HCT116 (cell line): ENCODE measurements at regions of chr10 and their contacts with region 1.

Region 1: GRCh38 chr10:101467286-101467770 is 113.4 kb downstream of the BTRC start:
- DNase-seq: peak; percentile 76
- ATAC-seq: peak; percentile 94
- H3K4me3 ChIP-seq: no peak overlapping the region
- H3K27ac ChIP-seq: no peak overlapping the region
- H3K4me1 ChIP-seq: no peaks in the 10 kb centered on the region
- H3K27me3 ChIP-seq: no peaks in the 10 kb centered on the region
- CTCF ChIP-seq: peak; percentile 85 to 99 (median 98)
- POLR2A ChIP-seq: no peak
- RAD21 ChIP-seq: peak; percentile 78

Region 2: GRCh38 chr10:101272229-101272868 is 195.0 kb before region 1 on chr10:
- CTCF ChIA-PET with region 1: interaction called, 13 read pairs
- POLR2A ChIA-PET with region 1: no interaction called
- RAD21 ChIA-PET with region 1: no interaction called
- intact Hi-C with region 1: no loop called
- DNase-seq: peak; percentile 69
- ATAC-seq: peak; percentile 96
- H3K4me3 ChIP-seq: no peak overlapping the region
- H3K27ac ChIP-seq: no peak overlapping the region; the same call in 1 of the 2 replicates
- H3K4me1 ChIP-seq: peaks cover 9 to 15% of the 10 kb centered on the region in 2 experiments
- H3K27me3 ChIP-seq: no peaks in the 10 kb centered on the region
- CTCF ChIP-seq: peak; percentile 79 to 98 (median 96)
- POLR2A ChIP-seq: no peak
- RAD21 ChIP-seq: peak; percentile 68

Region 3: DNA sequence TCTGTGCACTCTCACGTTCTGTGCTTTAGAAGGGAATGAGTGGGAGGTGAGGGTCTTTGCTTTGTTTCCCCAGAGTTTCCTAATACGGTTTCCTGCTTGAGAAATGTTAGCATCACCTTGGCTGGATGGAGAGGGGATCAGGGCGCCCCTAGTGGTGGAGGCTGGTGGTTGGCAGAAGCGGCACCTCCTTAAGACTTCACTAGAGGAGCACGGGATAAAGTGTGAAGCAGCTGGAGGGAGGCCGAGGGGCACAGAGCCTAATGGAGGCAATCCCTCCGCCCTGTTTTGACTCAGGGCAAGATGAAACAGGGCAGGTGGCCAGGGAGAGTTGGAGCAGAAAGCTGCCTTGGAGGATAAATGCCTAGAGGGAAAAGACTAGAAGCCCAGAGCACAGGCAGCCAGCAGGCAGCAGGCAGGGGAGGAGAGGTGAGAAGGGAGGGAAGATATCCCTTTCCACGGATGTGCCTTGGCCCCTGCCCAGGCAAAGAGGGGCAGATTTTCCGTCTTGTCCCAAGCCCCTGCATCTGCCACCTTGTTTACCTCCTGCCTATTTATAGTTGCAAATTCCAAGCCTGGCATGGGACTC is 169.3 kb before region 1 on chr10:
- CTCF ChIA-PET with region 1: interaction called, 65 read pairs
- POLR2A ChIA-PET with region 1: no interaction called
- RAD21 ChIA-PET with region 1: interaction called, 3 to 11 read pairs
- intact Hi-C with region 1: no loop called
- DNase-seq: peak; percentile 64
- ATAC-seq: peak; percentile 94
- H3K4me3 ChIP-seq: no peak overlapping the region
- H3K27ac ChIP-seq: no peak overlapping the region
- H3K4me1 ChIP-seq: peaks cover 0 to 5% of the 10 kb centered on the region in 2 experiments; a peak in 3 of 4 replicates
- H3K27me3 ChIP-seq: no peaks in the 10 kb centered on the region
- CTCF ChIP-seq: peak; percentile 86 to 97 (median 97)
- POLR2A ChIP-seq: no peak
- RAD21 ChIP-seq: peak; percentile 63

Region 4: GRCh38 chr10:101441541-101442455 is 25.5 kb before region 1 on chr10:
- CTCF ChIA-PET with region 1: interaction called, 37 read pairs
- POLR2A ChIA-PET with region 1: no interaction called
- RAD21 ChIA-PET with region 1: no interaction called
- intact Hi-C with region 1: no loop called
- DNase-seq: peak; percentile 80
- ATAC-seq: peak; percentile 99
- H3K4me3 ChIP-seq: no peak overlapping the region
- H3K27ac ChIP-seq: no peak overlapping the region
- H3K4me1 ChIP-seq: no peaks in the 10 kb centered on the region
- H3K27me3 ChIP-seq: no peaks in the 10 kb centered on the region
- CTCF ChIP-seq: peak; percentile 78 to 96 (median 84)
- POLR2A ChIP-seq: no peak
- RAD21 ChIP-seq: peak; percentile 97

Region 5: DNA sequence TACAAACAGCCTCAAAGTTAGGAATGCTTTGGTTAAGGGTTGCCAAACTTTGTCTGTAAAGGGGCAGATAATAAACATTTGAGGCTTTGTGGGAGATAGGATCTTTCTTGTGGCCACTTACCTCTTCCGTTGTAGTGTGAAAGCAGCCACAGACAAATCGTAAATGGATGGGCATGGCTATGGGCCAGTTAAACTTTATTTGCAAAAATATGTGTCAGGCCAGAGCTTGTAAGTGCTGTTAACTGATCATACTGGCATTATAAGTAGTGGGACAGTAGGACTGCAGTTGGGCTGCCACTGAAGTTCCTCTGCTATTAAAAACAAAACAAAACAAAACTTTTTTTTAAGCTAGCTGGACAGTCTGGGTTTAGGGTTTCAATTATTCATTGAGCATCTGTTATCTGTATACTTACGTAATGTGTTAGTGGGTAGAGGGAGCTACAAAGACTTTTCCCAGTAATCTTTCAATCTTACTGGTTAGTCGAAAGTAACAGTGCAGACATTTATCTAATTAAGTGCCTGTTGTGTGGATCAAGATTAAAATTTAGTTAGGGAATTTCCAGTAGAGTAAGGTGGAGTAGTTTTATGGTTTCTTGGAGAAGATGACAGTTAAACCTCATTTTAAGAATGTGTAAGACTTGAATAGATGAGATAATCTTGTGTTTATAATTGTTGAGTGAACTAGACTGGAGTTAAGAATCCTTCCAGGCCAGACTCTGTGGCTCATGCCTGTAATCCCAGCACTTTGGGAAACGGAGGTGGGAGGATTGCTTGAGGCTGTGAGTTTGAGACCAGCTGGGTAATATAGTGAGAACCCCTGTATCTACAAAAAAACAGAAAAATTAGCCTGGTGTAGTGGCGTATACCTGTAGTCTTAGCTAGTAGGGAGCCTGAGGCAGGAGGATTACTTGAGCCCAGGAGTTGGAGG is 13.3 kb before region 1 on chr10:
- CTCF ChIA-PET with region 1: interaction called, 24 read pairs
- POLR2A ChIA-PET with region 1: interaction called, 3 read pairs
- RAD21 ChIA-PET with region 1: no interaction called
- intact Hi-C with region 1: no loop called
- DNase-seq: no peak
- ATAC-seq: no peak
- H3K4me3 ChIP-seq: no peak overlapping the region
- H3K27ac ChIP-seq: no peak overlapping the region
- H3K4me1 ChIP-seq: no peaks in the 10 kb centered on the region
- H3K27me3 ChIP-seq: no peaks in the 10 kb centered on the region
- CTCF ChIP-seq: no peak
- POLR2A ChIP-seq: no peak
- RAD21 ChIP-seq: no peak

Region 6: DNA sequence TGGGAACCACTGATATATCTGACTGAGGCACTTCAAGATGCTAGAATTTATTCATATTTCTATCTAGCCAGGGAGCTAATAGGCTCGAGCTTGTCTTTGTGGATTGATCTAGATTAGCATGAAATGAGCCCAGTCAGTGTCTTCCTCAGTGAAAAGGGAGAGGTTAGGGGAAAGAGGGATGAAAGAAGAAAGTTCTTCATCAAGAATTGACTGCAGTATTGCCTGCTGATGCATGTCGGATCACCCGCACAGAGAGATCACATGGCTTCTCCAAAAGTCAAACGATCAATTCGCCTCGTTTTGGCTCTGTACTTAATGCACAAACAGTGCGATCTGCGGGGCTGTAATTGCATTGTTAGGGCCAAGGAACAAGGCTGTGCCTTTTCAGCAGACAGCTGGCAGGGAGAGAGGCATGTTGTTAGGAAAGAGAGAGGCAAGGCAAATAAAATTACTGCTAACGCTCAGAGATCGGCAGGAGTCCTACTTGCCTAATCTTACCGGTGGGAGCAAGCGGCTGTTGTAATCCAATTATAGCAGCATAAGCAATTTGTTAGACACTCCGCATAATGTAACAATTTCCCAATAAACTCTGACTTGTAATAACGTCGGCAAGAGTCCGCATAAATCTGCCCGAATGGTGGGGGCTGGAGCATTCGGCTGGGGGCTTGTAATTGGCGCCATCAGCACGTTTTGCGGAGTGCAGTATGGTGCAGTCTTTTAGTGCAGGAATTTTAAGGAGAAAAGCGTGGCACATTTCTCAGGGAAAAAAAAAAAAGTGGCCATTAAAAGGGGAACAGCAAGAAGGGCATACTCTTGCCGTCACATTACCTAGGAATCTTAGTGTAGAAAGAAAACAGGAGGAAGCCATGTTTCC is 18.6 kb after region 1 on chr10:
- CTCF ChIA-PET with region 1: interaction called, 18 read pairs
- POLR2A ChIA-PET with region 1: interaction called, 5 read pairs
- RAD21 ChIA-PET with region 1: no interaction called
- intact Hi-C with region 1: no loop called
- DNase-seq: no peak
- ATAC-seq: no peak
- H3K4me3 ChIP-seq: no peak overlapping the region
- H3K27ac ChIP-seq: no peak overlapping the region
- H3K4me1 ChIP-seq: no peaks in the 10 kb centered on the region
- H3K27me3 ChIP-seq: no peaks in the 10 kb centered on the region
- CTCF ChIP-seq: no peak
- POLR2A ChIP-seq: no peak
- RAD21 ChIP-seq: no peak

Region 7: GRCh38 chr10:101716851-101717659 is 249.7 kb after region 1 on chr10:
- CTCF ChIA-PET with region 1: no interaction called
- POLR2A ChIA-PET with region 1: no interaction called
- RAD21 ChIA-PET with region 1: no interaction called
- intact Hi-C with region 1: no loop called
- DNase-seq: no peak
- ATAC-seq: no peak
- H3K4me3 ChIP-seq: no peak overlapping the region
- H3K27ac ChIP-seq: no peak overlapping the region
- H3K4me1 ChIP-seq: no peaks in the 10 kb centered on the region; a peak in 1 of 4 replicates
- H3K27me3 ChIP-seq: no peaks in the 10 kb centered on the region
- CTCF ChIP-seq: no peak
- POLR2A ChIP-seq: no peak
- RAD21 ChIP-seq: no peak